ENCODE measurements at regions of chr17 and their contacts with region 1.

Region 1: DNA sequence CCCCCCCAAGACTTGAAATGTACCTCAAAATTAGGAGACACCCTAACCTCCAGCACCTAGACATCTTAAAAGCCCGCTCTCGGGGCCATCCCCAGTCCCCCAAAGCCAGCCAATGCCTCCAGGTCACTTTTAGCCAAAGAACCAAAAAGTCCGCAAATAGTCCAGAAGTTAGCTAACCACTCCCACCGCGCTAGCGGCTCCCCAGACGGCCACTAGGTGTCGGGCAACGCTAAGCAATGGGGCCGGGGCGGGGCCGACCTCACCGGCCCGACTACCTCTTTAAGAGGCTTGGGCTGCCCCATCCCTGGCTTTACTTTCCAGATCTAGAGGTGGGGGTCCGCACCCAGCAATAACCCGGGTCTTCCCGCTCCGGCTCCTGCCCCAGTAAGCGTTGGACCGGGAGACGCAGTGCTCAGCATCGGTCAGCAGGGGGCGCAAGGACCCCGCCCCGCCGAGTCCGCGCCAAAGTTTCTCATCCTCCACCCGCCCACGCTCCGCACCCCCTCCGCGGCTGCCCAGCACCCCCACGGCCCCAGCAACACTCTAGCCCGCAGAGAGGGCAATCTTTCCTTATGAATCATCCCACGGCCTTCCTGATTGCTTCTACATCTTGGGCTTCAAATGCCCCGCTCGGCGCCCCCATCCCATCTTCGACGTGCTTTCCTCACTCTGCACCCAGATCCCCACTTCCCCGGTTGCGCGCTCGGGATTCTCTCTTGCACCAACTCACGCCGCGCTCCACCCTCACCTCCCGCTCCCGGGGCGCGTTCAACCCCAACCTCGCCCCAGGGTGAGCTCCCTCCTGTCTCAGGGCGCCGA is 765 bp downstream of the COL1A1 start:
- DNase-seq: peak; percentile 95
- H3K4me3 Mint-ChIP-seq: peak overlapping the region; percentile 68
- H3K27ac Mint-ChIP-seq: peak overlapping the region; percentile 33
- H3K4me1 Mint-ChIP-seq: peaks cover 21% of the 10 kb centered on the region
- H3K27me3 Mint-ChIP-seq: peaks cover 88% of the 10 kb centered on the region
- CTCF ChIP-seq: peak; percentile 100

Region 2: DNA sequence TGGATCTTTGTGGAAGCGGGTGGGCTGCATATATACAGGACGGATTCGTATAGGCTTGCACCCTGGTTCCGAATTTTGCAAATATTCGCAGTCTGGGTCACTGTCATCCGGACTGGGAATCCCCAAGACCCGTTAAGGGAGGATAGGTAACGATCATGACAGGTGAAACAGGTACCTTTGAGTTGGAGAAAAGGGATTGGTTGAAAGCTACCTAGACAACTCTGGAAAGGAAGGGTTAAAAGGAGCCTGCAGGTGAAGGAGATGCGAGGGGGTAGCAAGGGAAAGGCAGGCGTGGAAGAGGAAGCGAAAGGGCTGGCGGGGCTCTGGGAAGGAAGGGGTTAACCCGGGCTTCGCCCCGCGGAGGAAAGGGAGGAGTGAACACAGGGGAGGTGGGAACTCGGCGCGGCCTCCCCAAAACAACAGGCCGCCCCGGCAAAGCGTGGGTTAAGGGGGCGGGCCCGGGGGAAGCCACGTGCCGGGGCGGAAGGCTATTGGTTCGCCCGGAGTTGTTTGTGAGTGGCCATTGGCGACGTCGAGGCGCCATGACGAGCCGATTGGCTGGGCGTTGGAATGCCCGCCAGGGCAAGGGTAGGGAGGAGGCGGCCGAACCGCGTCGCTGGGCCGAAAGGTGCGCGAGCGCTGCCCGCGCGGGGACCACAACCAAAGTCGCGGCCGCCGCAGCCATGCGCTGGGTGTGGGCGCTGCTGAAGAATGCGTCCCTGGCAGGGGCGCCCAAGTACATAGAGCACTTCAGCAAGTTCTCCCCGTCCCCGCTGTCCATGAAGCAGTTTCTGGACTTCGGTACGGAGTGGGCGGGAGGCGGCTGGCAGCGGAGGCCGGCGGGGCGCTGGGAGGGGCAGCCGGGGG is 105.7 kb before region 1 on chr17 and contains the start of gene PDK2:
- CTCF ChIA-PET with region 1: interaction called, 10 read pairs
- intact Hi-C with region 1: no loop called
- DNase-seq: peak; percentile 98
- H3K4me3 Mint-ChIP-seq: peak within 1 kb of the TSS; percentile 90
- H3K27ac Mint-ChIP-seq: peak within 1 kb of the TSS; percentile 89
- H3K4me1 Mint-ChIP-seq: peaks cover 48% of the 10 kb centered on the region
- H3K27me3 Mint-ChIP-seq: no peaks in the 10 kb centered on the region
- CTCF ChIP-seq: no peak
- total RNA-seq, gene PDK2: 29.5 and 39.1 TPM in 2 replicates

Region 3: GRCh38 chr17:50177983-50178834 is 22.5 kb before region 1 on chr17:
- CTCF ChIA-PET with region 1: interaction called, 14 read pairs
- intact Hi-C with region 1: no loop called
- DNase-seq: peak; percentile 94
- H3K4me3 Mint-ChIP-seq: peak overlapping the region; percentile 51
- H3K27ac Mint-ChIP-seq: peak overlapping the region; percentile 27
- H3K4me1 Mint-ChIP-seq: peaks cover 26% of the 10 kb centered on the region
- H3K27me3 Mint-ChIP-seq: peaks cover 36% of the 10 kb centered on the region
- CTCF ChIP-seq: peak; percentile 82

Region 4: GRCh38 chr17:50269477-50270434 is 69.1 kb after region 1 on chr17:
- CTCF ChIA-PET with region 1: interaction called, 58 read pairs
- intact Hi-C with region 1: loop called (anchors 1 kb)
- DNase-seq: peak; percentile 79
- H3K4me3 Mint-ChIP-seq: no peak overlapping the region
- H3K27ac Mint-ChIP-seq: no peak overlapping the region
- H3K4me1 Mint-ChIP-seq: peaks cover 32% of the 10 kb centered on the region
- H3K27me3 Mint-ChIP-seq: peaks cover 67% of the 10 kb centered on the region
- CTCF ChIP-seq: peak; percentile 87

Region 5: GRCh38 chr17:50297407-50297865 is 96.8 kb after region 1 on chr17:
- CTCF ChIA-PET with region 1: interaction called, 90 read pairs
- intact Hi-C with region 1: loop called (anchors 1 kb)
- DNase-seq: peak; percentile 94
- H3K4me3 Mint-ChIP-seq: no peak overlapping the region
- H3K27ac Mint-ChIP-seq: no peak overlapping the region
- H3K4me1 Mint-ChIP-seq: no peaks in the 10 kb centered on the region
- H3K27me3 Mint-ChIP-seq: peaks cover 27% of the 10 kb centered on the region
- CTCF ChIP-seq: peak; percentile 99

Measured in Calu3 (cell line).